Sigmoid colon (tissue), 7 donors: ENCODE measurements at regions of chr11 and their contacts with region 1.

Region 1: DNA sequence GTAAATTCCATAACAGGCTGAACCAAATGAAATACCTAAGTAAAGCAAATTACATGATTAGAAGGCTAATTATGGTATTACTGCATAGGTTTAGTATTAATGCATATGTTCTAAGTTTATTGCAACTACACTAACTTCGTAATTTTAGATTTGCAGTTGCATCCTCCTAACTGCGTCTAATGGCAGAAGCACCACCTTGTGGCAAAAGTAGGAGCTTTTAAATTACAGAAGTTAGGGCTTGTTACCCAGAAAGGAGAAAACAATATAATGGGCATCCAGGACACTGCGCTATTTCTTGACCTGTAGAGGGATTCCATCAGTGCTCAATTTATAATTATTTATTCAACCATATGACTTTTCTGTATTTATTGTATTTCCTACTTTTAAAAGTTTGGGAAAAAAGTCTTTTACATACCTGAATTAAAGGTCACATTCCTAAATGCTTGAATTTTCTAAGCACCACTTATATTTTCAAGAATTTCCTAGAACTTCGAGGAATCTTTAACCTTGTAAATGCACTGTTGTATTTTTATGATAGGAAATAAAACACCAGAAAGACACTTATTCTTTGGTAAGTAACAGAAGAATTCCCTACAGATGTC is 16.3 kb upstream of the GPR83 start:
- DNase-seq: no peak
- H3K4me3 ChIP-seq: no peak overlapping the region
- H3K27ac ChIP-seq: no peak overlapping the region
- H3K4me1 ChIP-seq: peaks cover 0 to 7% (median 0%) of the 10 kb centered on the region in 4 donors
- H3K27me3 ChIP-seq: no peaks in the 10 kb centered on the region
- CTCF ChIP-seq: peak in 3 of 4 experiments; percentile 36 to 62 (median 53)
- EP300 ChIP-seq: no peak
- POLR2A ChIP-seq: no peak

Region 2: GRCh38 chr11:93895106-93895862 is 522.2 kb before region 1 on chr11:
- intact Hi-C with region 1: loop called (anchors 5 kb)
- DNase-seq: no peak
- H3K4me3 ChIP-seq: no peak overlapping the region
- H3K27ac ChIP-seq: no peak overlapping the region
- H3K4me1 ChIP-seq: no peaks in the 10 kb centered on the region
- H3K27me3 ChIP-seq: no peaks in the 10 kb centered on the region
- CTCF ChIP-seq: peak in 3 of 4 experiments; percentile 47 to 64 (median 64)
- EP300 ChIP-seq: no peak
- POLR2A ChIP-seq: no peak

Region 3: GRCh38 chr11:94183886-94184264 is 233.6 kb before region 1 on chr11:
- intact Hi-C with region 1: loop called (anchors 5 kb)
- DNase-seq: peak; percentile 69
- H3K4me3 ChIP-seq: no peak overlapping the region
- H3K27ac ChIP-seq: no peak overlapping the region
- H3K4me1 ChIP-seq: peaks cover 0 to 26% (median 13%) of the 10 kb centered on the region in 4 donors
- H3K27me3 ChIP-seq: no peaks in the 10 kb centered on the region
- CTCF ChIP-seq: peak; percentile 45 to 82 (median 65)
- EP300 ChIP-seq: no peak
- POLR2A ChIP-seq: no peak

Region 4: GRCh38 chr11:94459576-94459975 is 42.1 kb after region 1 on chr11:
- intact Hi-C with region 1: no loop called
- DNase-seq: no peak
- H3K4me3 ChIP-seq: no peak overlapping the region
- H3K27ac ChIP-seq: no peak overlapping the region
- H3K4me1 ChIP-seq: no peaks in the 10 kb centered on the region
- H3K27me3 ChIP-seq: no peaks in the 10 kb centered on the region
- CTCF ChIP-seq: no peak
- EP300 ChIP-seq: no peak
- POLR2A ChIP-seq: no peak